Heart right ventricle (tissue), 16 donors: ENCODE measurements at regions of chr3 and their contacts with region 1.

Region 1: DNA sequence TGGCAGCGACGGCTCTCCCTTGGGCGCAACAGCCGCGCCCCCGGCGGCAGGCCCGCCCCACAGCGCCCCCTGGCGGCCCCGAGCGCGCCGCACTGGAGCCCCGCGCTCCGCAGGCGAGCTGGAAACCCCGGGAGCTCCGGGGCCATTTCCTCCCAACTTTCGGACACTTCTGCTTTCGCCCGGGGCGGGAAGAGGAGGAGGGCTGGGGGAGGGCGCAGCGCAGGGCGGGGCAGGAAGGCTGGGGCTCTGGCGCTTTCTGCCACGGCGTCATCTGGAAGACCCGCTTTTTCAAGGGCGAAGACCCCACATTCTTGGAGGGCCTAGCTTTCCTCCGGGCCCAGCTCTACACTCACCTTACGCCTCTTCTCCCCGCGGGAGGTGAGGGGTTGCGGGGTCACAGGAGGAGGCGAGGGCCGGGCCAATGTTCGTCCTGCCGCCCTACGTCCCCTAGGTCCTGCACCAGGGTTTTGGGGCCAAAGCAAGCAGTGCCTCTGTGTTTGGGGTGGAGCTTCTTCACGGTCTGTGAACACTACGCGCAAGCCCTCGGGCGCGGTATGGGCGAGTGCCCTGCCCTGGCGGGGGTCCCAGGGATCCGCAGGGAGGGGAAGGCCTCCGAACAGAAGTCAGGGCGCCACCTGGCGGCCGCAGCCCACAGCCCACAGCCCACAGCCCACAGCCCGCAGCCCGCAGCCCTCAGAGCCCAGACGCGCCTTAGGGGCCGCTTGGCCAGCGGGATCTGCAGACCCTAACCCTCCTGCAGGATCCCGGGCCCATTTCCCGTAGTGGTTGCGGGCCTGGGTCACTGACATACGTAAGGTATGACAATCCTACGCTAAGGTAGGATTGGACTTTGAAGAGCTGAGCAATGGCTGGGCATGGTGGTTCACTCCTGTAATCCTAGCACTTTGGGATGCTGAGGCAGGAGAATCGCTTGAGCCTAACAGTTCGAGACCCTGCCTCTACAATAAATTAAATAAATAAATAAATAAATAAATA is 31.1 kb downstream of the FOXL2 start:
- DNase-seq: peak; percentile 92 to 96
- ATAC-seq: peak; percentile 96 to 99 (median 98)
- H3K4me3 ChIP-seq: peak overlapping the region; percentile 55 to 92 (median 81)
- H3K27ac ChIP-seq: peak overlapping the region; percentile 92 to 99 (median 96)
- H3K4me1 ChIP-seq: peaks cover 0 to 18% (median 7%) of the 10 kb centered on the region in 9 donors
- H3K27me3 ChIP-seq: no peaks in the 10 kb centered on the region
- CTCF ChIP-seq: peak; percentile 81 to 98 (median 88)

Region 2: DNA sequence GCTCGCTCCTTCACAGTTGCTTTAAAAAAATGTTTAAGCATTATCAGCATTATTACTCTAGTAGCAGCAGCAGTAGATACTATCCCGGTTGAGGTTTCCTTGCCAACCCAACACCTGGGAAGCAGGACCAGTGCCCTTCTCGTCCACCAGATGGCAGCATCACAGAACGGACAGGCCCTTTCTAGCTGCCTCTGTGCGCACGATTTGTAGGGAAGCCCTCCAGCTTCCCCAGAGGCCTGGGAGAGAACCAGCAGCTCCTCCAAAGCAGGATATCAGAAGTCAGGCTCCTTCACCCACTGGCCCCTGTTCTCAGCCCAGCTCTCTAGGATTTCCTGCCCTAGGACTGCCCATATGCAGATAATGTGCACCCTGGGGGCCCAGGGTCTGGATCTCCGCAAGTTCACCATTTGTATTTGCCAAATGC is 498.2 kb before region 1 on chr3:
- intact Hi-C with region 1: loop called in 3 of 10 experiments (anchors 5 kb)
- DNase-seq: peak; percentile 69 to 83
- ATAC-seq: peak; percentile 80 to 91 (median 88)
- H3K4me3 ChIP-seq: no peak overlapping the region
- H3K27ac ChIP-seq: no peak overlapping the region
- H3K4me1 ChIP-seq: peaks cover 0 to 21% (median 6%) of the 10 kb centered on the region in 9 donors
- H3K27me3 ChIP-seq: no peaks in the 10 kb centered on the region
- CTCF ChIP-seq: peak; percentile 79 to 96 (median 92)

Region 3: GRCh38 chr3:138594150-138594934 is 321.5 kb before region 1 on chr3 and contains the start of gene CEP70:
- intact Hi-C with region 1: loop called in 9 of 10 experiments (anchors 1 to 5 kb)
- DNase-seq: peak; percentile 93 to 94
- ATAC-seq: peak; percentile 98 to 99 (median 99)
- H3K4me3 ChIP-seq: peak within 1 kb of the TSS; percentile 62 to 91 (median 74)
- H3K27ac ChIP-seq: peak within 1 kb of the TSS; percentile 45 to 91 (median 87)
- H3K4me1 ChIP-seq: peaks cover 0 to 25% (median 9%) of the 10 kb centered on the region in 9 donors
- H3K27me3 ChIP-seq: peaks cover 0 to 8% (median 0%) of the 10 kb centered on the region in 7 donors
- CTCF ChIP-seq: peak; percentile 77 to 93 (median 90)
- total RNA-seq, gene CEP70: 22.2 to 32.2 (median 24.8) TPM

Region 4: GRCh38 chr3:138694287-138695007 is 221.4 kb before region 1 on chr3:
- intact Hi-C with region 1: loop called in 6 of 10 experiments (anchors 1 to 5 kb)
- DNase-seq: no peak
- ATAC-seq: no peak
- H3K4me3 ChIP-seq: no peak overlapping the region
- H3K27ac ChIP-seq: no peak overlapping the region
- H3K4me1 ChIP-seq: peaks cover 0 to 4% (median 0%) of the 10 kb centered on the region in 9 donors
- H3K27me3 ChIP-seq: no peaks in the 10 kb centered on the region
- CTCF ChIP-seq: no peak

Region 5: GRCh38 chr3:138774529-138775253 is 141.1 kb before region 1 on chr3:
- intact Hi-C with region 1: loop called in 2 of 10 experiments (anchors 5 to 10 kb)
- DNase-seq: peak in 1 of 2 donors; percentile 81
- ATAC-seq: peak; percentile 79 to 97 (median 90)
- H3K4me3 ChIP-seq: no peak overlapping the region
- H3K27ac ChIP-seq: peak overlapping the region; percentile 5 to 84 (median 60)
- H3K4me1 ChIP-seq: peaks cover 13 to 40% (median 22%) of the 10 kb centered on the region in 9 donors
- H3K27me3 ChIP-seq: no peaks in the 10 kb centered on the region
- CTCF ChIP-seq: peak in 1 of 9 donors; percentile 8

Region 6: DNA sequence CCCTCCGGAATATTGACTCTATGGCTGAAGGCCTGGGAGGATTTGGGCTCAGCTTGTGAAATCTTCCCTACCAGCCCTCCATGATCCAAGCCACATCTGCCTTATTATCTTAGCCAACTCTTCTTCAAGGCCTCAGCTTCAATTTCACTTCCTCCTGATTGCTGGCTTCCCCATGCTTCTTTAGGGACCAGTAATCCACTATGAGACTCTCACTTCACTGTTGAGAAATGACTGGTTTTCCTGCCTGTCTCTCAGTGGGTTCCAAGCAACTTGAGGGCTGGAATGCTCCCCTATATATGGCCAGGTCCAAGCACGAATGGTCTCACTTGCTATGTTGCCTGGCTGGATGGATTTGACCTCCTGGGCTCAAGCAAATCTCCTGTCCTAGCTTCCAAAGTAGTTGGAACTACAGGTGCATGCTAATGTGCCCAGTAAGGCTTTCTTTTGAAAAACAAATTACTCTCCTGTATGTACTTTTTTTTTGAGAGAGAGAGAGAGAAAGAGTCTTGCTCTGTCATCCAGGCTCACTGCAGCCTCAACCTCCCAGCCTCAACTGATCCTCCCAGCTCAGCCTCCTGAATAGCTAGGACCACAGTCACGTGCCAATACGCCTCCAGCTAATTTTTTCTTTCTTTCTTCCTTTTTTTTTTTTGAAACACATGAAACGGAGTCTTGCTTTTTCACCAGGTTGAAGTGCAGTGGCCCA is 73.2 kb before region 1 on chr3:
- intact Hi-C with region 1: loop called in 3 of 10 experiments (anchors 5 to 10 kb)
- DNase-seq: no peak
- ATAC-seq: peak in 2 of 8 donors; percentile 14 to 56
- H3K4me3 ChIP-seq: no peak overlapping the region
- H3K27ac ChIP-seq: peak overlapping the region in 1 of 10 donors; percentile 56
- H3K4me1 ChIP-seq: peaks cover 0 to 35% (median 12%) of the 10 kb centered on the region in 9 donors
- H3K27me3 ChIP-seq: no peaks in the 10 kb centered on the region
- CTCF ChIP-seq: no peak